Esophagus squamous epithelium (tissue), 5 donors: ENCODE measurements at regions of chr19 and their contacts with region 1.

Region 1: GRCh38 chr19:10717356-10718204 is at the start of gene DNM2:
- DNase-seq: peak; percentile 98
- H3K4me3 ChIP-seq: peak within 1 kb of the TSS; percentile 79 to 94 (median 91)
- H3K27ac ChIP-seq: peak within 1 kb of the TSS; percentile 93 to 96 (median 94)
- H3K4me1 ChIP-seq: peaks cover 23 to 41% (median 28%) of the 10 kb centered on the region in 3 donors
- H3K27me3 ChIP-seq: no peaks in the 10 kb centered on the region
- CTCF ChIP-seq: peak; percentile 73 to 96 (median 86)
- POLR2A ChIP-seq: peak in 3 of 4 donors; percentile 70 to 89 (median 82)
- total RNA-seq, gene DNM2: 79.9 to 138 (median 102) TPM

Region 2: GRCh38 chr19:10808937-10809652 is 91.5 kb after region 1 on chr19:
- intact Hi-C with region 1: loop called (anchors 10 kb)
- DNase-seq: no peak
- H3K4me3 ChIP-seq: no peak overlapping the region
- H3K27ac ChIP-seq: peak overlapping the region; percentile 45 to 84 (median 59)
- H3K4me1 ChIP-seq: peaks cover 3 to 35% (median 4%) of the 10 kb centered on the region in 3 donors
- H3K27me3 ChIP-seq: no peaks in the 10 kb centered on the region
- CTCF ChIP-seq: peak in 1 of 6 experiments; percentile 5
- POLR2A ChIP-seq: no peak

Region 3: GRCh38 chr19:10864538-10864899 is 146.9 kb after region 1 on chr19:
- intact Hi-C with region 1: loop called (anchors 5 kb)
- DNase-seq: no peak
- H3K4me3 ChIP-seq: peak overlapping the region in 2 of 4 donors; percentile 10 to 33
- H3K27ac ChIP-seq: peak overlapping the region in 3 of 4 donors; percentile 20 to 73 (median 33)
- H3K4me1 ChIP-seq: peaks cover 0 to 20% (median 8%) of the 10 kb centered on the region in 3 donors
- H3K27me3 ChIP-seq: no peaks in the 10 kb centered on the region
- CTCF ChIP-seq: peak; percentile 78 to 90 (median 86)
- POLR2A ChIP-seq: no peak